Sciatic nerve (tissue), 2 donors: ENCODE measurements at regions of chr10 and their contacts with region 1.

Region 1: GRCh38 chr10:75401569-75402485 is at the start of gene ZNF503:
- DNase-seq: peak; percentile 98
- ATAC-seq: peak; percentile 93
- total RNA-seq, gene ZNF503: 30.2 TPM

Region 2: DNA sequence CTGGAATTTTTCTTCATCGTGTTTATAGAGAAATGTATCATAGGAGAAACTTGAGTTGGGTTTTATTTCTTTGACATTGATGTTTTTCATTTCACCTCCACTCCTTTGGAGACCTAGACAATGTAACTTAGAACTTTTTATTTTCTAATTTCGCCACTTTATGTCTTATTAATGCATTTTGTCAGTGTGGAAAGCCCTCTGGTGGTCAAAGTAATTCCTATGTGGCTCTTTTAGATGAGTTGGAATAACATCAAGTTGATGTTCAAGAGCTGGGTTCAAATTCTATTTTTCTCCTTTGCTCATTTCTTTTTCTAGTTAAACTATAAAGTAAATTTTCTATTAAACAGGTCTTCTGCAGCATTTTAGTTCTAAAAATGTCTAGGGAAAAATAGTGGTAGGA is 508.2 kb after region 1 on chr10:
- intact Hi-C with region 1: loop called (anchors 10 kb)
- DNase-seq: no peak
- ATAC-seq: no peak

Region 3: GRCh38 chr10:76036111-76036940 is 634.5 kb after region 1 on chr10:
- intact Hi-C with region 1: loop called (anchors 5 kb)
- DNase-seq: peak; percentile 89
- ATAC-seq: peak; percentile 88

Region 4: GRCh38 chr10:76303682-76304316 is 902.0 kb after region 1 on chr10:
- intact Hi-C with region 1: loop called (anchors 10 kb)
- DNase-seq: peak; percentile 75
- ATAC-seq: peak; percentile 96